Esophagus muscularis mucosa (tissue), 4 donors: ENCODE measurements at regions of chr11 and their contacts with region 1.

Region 1: DNA sequence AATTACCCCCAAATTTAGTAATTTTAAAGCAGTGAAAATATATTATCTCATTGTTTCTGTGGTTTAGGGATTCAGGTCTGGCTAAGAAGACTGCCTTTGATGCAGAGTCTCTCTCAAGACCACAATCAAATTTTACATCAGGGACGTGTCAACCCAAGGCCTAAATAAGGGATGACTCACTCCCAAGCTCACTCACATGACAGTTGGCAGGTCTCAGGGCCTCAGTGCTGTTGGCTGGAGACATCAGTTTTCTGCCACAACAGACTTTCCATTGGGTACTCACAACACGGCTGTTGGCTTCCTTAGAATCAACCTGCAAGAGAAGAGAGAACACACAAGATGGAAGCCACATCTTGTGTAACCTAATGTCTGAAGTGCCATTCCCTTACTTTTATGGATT is 377.3 kb downstream of the FAM181B start:
- DNase-seq: no peak
- H3K4me3 ChIP-seq: no peak overlapping the region
- H3K27ac ChIP-seq: no peak overlapping the region
- H3K4me1 ChIP-seq: no peaks in the 10 kb centered on the region
- H3K27me3 ChIP-seq: no peaks in the 10 kb centered on the region
- CTCF ChIP-seq: no peak
- EP300 ChIP-seq: no peak
- POLR2A ChIP-seq: no peak

Region 2: GRCh38 chr11:81749245-81749644 is 607.1 kb before region 1 on chr11:
- intact Hi-C with region 1: no loop called
- DNase-seq: no peak
- H3K4me3 ChIP-seq: no peak overlapping the region
- H3K27ac ChIP-seq: no peak overlapping the region
- H3K4me1 ChIP-seq: no peaks in the 10 kb centered on the region
- H3K27me3 ChIP-seq: no peaks in the 10 kb centered on the region
- CTCF ChIP-seq: no peak
- EP300 ChIP-seq: no peak
- POLR2A ChIP-seq: no peak

Region 3: GRCh38 chr11:82303671-82304070 is 52.6 kb before region 1 on chr11:
- intact Hi-C with region 1: loop called (anchors 5 kb)
- DNase-seq: no peak
- H3K4me3 ChIP-seq: no peak overlapping the region
- H3K27ac ChIP-seq: no peak overlapping the region
- H3K4me1 ChIP-seq: no peaks in the 10 kb centered on the region
- H3K27me3 ChIP-seq: no peaks in the 10 kb centered on the region
- CTCF ChIP-seq: no peak
- EP300 ChIP-seq: no peak
- POLR2A ChIP-seq: no peak